ENCODE measurements at regions of chr22 and their contacts with region 1.

Region 1: DNA sequence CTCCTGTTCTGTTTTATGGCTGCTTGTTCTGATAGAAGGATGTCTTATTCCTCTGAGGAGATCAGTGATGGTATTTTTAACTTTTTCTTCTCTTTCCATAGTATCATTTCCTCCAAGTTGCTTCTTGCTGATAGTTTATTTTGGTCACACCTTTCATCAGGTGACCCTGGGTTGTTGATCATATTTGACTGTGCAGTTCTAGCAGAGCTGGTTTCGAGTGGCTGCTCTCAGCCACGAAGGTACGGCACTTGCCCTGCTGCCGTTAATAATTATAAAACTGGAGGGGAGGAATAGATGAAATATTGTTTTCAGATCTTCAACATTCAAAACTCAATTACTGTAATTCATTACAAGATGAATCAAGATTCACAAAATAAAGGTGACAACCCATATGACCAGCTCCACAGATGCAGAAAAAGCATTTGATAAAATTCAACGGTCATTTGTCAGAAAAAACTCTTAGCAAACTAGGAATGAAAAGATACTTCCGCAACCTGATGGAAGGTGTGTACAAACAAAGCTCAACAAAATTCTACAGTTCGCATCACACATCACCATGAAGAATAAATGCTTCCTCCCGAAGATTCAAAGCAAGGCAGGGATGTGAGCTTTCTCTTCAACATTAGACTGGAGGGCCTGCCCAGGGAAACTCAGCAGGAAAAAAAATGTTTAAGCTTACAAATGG is 59.2 kb upstream of the RTL6 start:
- DNase-seq: no peak
- H3K4me3 ChIP-seq: no peak overlapping the region
- H3K27me3 ChIP-seq: 0 out of 2 replicates have a peak, but pooled peaks cover 2% of the 10 kb centered on the region
- CTCF ChIP-seq: no peak

Region 2: GRCh38 chr22:44242946-44243724 is 314.1 kb before region 1 on chr22:
- CTCF ChIA-PET with region 1: no interaction called
- POLR2A ChIA-PET with region 1: no interaction called
- DNase-seq: no peak
- H3K4me3 ChIP-seq: no peak overlapping the region
- H3K27me3 ChIP-seq: peaks cover 4% of the 10 kb centered on the region
- CTCF ChIP-seq: no peak

Region 3: GRCh38 chr22:44448271-44448830 is 108.9 kb before region 1 on chr22:
- CTCF ChIA-PET with region 1: no interaction called
- POLR2A ChIA-PET with region 1: no interaction called
- DNase-seq: peak; percentile 71
- H3K4me3 ChIP-seq: no peak overlapping the region
- H3K27me3 ChIP-seq: no peaks in the 10 kb centered on the region
- CTCF ChIP-seq: no peak

Region 4: GRCh38 chr22:44538051-44538450 is 19.2 kb before region 1 on chr22:
- CTCF ChIA-PET with region 1: no interaction called
- POLR2A ChIA-PET with region 1: no interaction called
- DNase-seq: no peak
- H3K4me3 ChIP-seq: no peak overlapping the region
- H3K27me3 ChIP-seq: peaks cover 20% of the 10 kb centered on the region
- CTCF ChIP-seq: no peak

Region 5: GRCh38 chr22:44567846-44568493 is 10.8 kb after region 1 on chr22:
- CTCF ChIA-PET with region 1: interaction called, 11 read pairs
- POLR2A ChIA-PET with region 1: no interaction called
- DNase-seq: no peak
- H3K4me3 ChIP-seq: no peak overlapping the region
- H3K27me3 ChIP-seq: no peaks in the 10 kb centered on the region; the same call in 1 of the 2 replicates
- CTCF ChIP-seq: peak; percentile 69

Region 6: GRCh38 chr22:44648818-44649565 is 91.8 kb after region 1 on chr22:
- CTCF ChIA-PET with region 1: no interaction called
- POLR2A ChIA-PET with region 1: no interaction called
- DNase-seq: peak; percentile 97
- H3K4me3 ChIP-seq: no peak overlapping the region
- H3K27me3 ChIP-seq: no peaks in the 10 kb centered on the region
- CTCF ChIP-seq: no peak